ENCODE measurements at regions of chr21 and their contacts with region 1.

Region 1: GRCh38 chr21:26850108-26850643 is 5.0 kb upstream of the ADAMTS1 start:
- DNase-seq: no peak
- H3K4me3 ChIP-seq: no peak overlapping the region
- H3K4me3 Mint-ChIP-seq: no peak overlapping the region
- H3K27ac ChIP-seq: no peak overlapping the region
- H3K27ac Mint-ChIP-seq: no peak overlapping the region
- H3K4me1 ChIP-seq: peaks cover 17% of the 10 kb centered on the region
- H3K4me1 Mint-ChIP-seq: peaks cover 14 to 22% (median 19%) of the 10 kb centered on the region in 4 donors
- H3K27me3 ChIP-seq: peaks cover 5% of the 10 kb centered on the region
- H3K27me3 Mint-ChIP-seq: peaks cover 29 to 38% of the 10 kb centered on the region in 2 donors

Region 2: DNA sequence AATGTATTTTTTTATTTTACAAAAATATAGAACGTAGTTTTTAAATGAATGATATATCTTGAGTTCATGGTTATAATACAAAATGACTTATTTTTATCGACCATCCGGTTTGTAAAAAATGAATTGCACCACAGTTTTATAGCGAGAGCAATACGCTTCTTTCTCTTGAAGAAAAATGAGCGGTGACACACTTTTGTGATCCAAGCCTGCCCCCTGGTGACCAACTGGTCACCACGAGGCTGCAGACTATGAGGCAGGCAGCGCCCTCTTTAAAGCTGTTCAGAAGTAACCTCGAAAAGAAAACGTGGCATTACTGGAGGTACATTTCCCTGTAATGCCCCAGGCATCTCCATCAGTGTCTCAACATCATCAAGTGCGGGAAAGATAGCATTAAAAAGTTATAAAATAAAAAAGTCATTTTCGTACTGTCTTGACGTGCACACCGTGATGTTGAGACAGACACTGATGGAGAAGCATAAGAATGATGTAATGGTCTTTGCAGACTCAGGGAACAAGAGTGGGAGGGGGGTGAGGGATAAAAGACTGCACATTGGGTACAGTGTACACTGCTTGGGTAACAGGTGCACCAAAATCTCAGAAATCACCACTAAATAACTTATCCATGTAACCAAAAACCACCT is 850.9 kb after region 1 on chr21:
- CTCF ChIA-PET with region 1: no interaction called
- POLR2A ChIA-PET with region 1: no interaction called
- intact Hi-C with region 1: loop called (anchors 2 kb)
- DNase-seq: peak; percentile 3 to 47 (median 30)
- H3K4me3 ChIP-seq: no peak overlapping the region
- H3K4me3 Mint-ChIP-seq: no peak overlapping the region
- H3K27ac ChIP-seq: no peak overlapping the region
- H3K27ac Mint-ChIP-seq: no peak overlapping the region
- H3K4me1 ChIP-seq: no peaks in the 10 kb centered on the region
- H3K4me1 Mint-ChIP-seq: peaks cover 0 to 3% (median under 1%) of the 10 kb centered on the region in 4 donors
- H3K27me3 ChIP-seq: no peaks in the 10 kb centered on the region
- H3K27me3 Mint-ChIP-seq: peaks cover 0 to 2% of the 10 kb centered on the region in 2 donors